ENCODE measurements at regions of chr6 and their contacts with region 1.

Region 1: GRCh38 chr6:46011241-46012085 is 4.2 kb downstream of the CLIC5 start:
- DNase-seq: peak; percentile 37
- ATAC-seq: peak; percentile 21

Region 2: DNA sequence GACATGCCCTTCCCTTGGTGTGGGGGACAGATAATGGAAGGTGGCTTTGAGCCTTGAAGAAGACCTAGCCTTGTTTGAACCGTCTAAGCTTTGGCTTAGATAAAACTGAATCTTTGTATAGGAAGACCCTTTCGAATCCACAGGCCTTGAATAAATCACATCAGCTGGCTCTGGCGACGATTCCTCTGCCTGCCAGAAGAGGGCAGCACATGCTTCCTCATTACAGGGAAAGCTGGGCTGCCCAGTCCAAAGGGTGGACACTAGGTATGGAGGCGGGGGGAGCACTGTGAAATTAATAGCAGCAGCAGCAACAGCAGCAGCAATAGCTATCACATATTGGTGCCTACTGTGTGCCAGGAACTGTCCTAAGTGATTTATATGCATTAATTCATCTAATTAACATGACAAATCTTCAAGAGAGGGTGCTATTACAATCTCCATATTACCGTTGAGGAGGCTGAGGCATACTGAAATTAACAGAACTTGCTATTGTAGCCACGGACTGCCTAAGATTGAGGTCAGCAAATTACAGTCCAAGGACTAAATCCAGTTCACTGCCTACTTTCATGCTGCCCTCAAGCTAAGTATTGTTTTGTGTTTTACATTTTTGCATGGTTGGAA is 80.9 kb before region 1 on chr6:
- intact Hi-C with region 1: loop called in 1 of 2 experiments (anchors 2 kb)
- DNase-seq: peak; percentile 73
- ATAC-seq: peak; percentile 79 to 85

Region 3: DNA sequence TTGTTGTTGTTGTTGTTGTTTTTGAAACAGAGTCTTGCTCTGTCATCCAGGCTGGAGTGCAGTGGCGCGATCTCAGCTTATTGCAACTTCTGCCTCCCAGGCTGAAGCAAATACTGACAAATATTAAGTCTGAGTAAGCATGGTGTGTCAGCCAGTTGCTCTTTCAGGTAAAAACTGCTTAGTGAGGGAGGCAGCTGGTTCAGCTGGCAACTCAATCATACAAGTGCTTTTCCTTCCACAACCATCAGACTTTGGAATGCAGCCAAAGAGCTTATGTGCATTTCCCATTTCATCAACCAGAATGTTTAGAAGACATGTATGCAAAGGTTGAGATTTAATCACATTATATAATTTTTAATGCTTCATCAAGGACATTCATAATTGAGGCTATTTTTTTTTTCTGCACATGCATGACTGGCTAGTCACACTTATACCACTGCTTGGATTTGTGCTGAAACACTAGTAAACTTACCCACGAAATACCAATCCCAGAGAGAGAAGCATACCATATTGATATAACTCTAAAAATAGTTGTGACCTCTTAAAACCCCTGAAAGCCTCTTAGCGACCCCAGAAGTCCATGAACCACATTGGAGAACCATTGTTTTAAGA is 51.8 kb before region 1 on chr6:
- intact Hi-C with region 1: loop called in 1 of 2 experiments (anchors 10 kb)
- DNase-seq: no peak
- ATAC-seq: peak in 1 of 2 donors; percentile 63